GM12878 (cell line): ENCODE measurements at regions of chr13 and their contacts with region 1.

Region 1: GRCh38 chr13:24270639-24271141 is 38.7 kb upstream of the C1QTNF9 start:
- DNase-seq: peak; percentile 38
- ATAC-seq: peak; percentile 71
- H3K4me3 ChIP-seq: peak overlapping the region; percentile 60
- H3K27ac ChIP-seq: peak overlapping the region; percentile 93
- H3K4me1 ChIP-seq: peaks cover 46% of the 10 kb centered on the region
- H3K27me3 ChIP-seq: no peaks in the 10 kb centered on the region
- CTCF ChIP-seq: no peak
- EP300 ChIP-seq: no peak
- POLR2A ChIP-seq: peak; percentile 77
- RAD21 ChIP-seq: peak; percentile 16; the same call in 1 of the 2 replicates

Region 2: GRCh38 chr13:24234200-24234915 is 36.3 kb before region 1 on chr13:
- CTCF ChIA-PET with region 1: interaction called, 15 read pairs
- POLR2A ChIA-PET with region 1: interaction called, 15 read pairs
- RAD21 ChIA-PET with region 1: interaction called, 80 read pairs
- SMC1A ChIA-PET with region 1: interaction called, 25 read pairs
- in situ Hi-C with region 1: no loop called
- intact Hi-C with region 1: no loop called
- DNase-seq: no peak
- ATAC-seq: peak; percentile 72
- H3K4me3 ChIP-seq: no peak overlapping the region
- H3K27ac ChIP-seq: no peak overlapping the region
- H3K4me1 ChIP-seq: peaks cover 4% of the 10 kb centered on the region; the same call in 1 of the 2 replicates
- H3K27me3 ChIP-seq: no peaks in the 10 kb centered on the region
- CTCF ChIP-seq: no peak
- EP300 ChIP-seq: no peak
- POLR2A ChIP-seq: no peak
- RAD21 ChIP-seq: no peak

Region 3: GRCh38 chr13:24355103-24355502 is 84.4 kb after region 1 on chr13:
- CTCF ChIA-PET with region 1: no interaction called
- POLR2A ChIA-PET with region 1: no interaction called
- RAD21 ChIA-PET with region 1: no interaction called
- SMC1A ChIA-PET with region 1: no interaction called
- in situ Hi-C with region 1: no loop called
- intact Hi-C with region 1: no loop called
- DNase-seq: no peak
- ATAC-seq: no peak; the same call in 2 of the 3 replicates
- H3K4me3 ChIP-seq: no peak overlapping the region
- H3K27ac ChIP-seq: no peak overlapping the region
- H3K4me1 ChIP-seq: no peaks in the 10 kb centered on the region
- H3K27me3 ChIP-seq: no peaks in the 10 kb centered on the region
- CTCF ChIP-seq: no peak
- EP300 ChIP-seq: no peak
- POLR2A ChIP-seq: no peak
- RAD21 ChIP-seq: no peak

Region 4: DNA sequence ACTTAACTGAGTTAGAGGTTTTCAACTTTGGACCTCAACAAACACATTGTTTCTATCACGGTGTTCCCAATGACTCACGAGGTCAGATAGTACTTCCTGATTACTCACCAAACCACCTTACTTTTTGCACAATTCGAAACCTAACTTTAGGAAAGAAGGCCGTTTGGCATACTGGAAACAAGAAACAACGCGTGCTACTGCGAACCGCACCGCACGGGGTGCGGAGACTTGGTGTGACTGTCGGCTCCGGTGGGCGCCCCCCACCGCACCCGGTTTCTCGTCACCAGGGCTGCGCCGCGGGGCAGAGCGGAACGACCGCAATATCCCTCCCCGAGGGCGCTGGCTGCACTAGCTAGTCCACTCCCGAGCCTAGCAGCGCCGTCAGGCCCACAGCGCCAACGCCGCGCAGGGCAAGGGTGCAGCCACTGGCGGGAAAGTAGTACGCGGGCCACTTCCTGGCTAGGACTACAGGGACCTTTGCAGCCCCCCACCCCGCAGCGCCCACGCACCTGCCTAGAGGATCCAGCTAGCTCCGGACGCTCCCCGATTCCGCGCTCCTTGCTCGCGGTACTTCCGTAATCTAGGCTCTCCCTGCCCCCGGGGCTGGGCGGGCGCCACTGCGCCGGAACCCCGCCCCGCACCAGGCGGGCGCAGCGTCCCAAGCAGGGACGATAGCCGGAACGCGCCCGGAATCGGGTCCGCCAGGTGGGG is 241.7 kb after region 1 on chr13 and contains the start of gene PARP4:
- CTCF ChIA-PET with region 1: no interaction called
- POLR2A ChIA-PET with region 1: no interaction called
- RAD21 ChIA-PET with region 1: interaction called, 4 read pairs
- SMC1A ChIA-PET with region 1: no interaction called
- in situ Hi-C with region 1: no loop called
- intact Hi-C with region 1: loop called (anchors 5 kb)
- DNase-seq: peak; percentile 34
- ATAC-seq: peak; percentile 89
- H3K4me3 ChIP-seq: peak within 1 kb of the TSS; percentile 82
- H3K27ac ChIP-seq: peak within 1 kb of the TSS; percentile 85
- H3K4me1 ChIP-seq: no peaks in the 10 kb centered on the region
- H3K27me3 ChIP-seq: no peaks in the 10 kb centered on the region
- CTCF ChIP-seq: no peak
- EP300 ChIP-seq: no peak
- POLR2A ChIP-seq: peak; percentile 92
- RAD21 ChIP-seq: no peak
- polyA plus RNA-seq, gene PARP4: 12.8 to 13.5 TPM

Region 5: DNA sequence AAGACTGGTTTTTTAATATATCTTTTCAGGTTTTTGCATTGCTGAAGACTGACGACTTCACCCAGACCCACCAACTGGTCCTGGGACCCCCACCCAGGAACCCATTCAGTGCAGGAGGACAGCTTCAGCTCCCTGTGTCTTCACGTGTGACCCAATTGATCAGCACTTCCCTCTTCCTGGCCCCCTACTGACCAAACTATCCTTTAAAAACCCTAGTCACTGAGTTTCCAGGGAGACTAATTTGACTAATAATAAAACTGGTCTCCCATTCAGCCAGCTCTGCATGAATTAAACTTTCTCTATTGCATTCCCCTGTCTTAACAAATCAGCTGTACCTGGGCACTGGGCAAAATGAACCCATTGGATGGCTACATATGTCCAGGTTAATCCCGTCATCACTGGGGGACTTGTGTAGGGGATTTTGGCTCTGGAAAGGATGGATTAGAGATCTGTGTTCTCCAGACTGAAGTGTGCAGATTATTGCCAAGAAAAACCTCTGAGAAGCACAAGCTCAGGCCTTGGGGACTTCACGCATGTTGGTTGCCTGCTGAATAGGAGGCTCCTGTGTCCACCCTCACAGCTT is 258.2 kb after region 1 on chr13:
- CTCF ChIA-PET with region 1: no interaction called
- POLR2A ChIA-PET with region 1: no interaction called
- RAD21 ChIA-PET with region 1: no interaction called
- SMC1A ChIA-PET with region 1: no interaction called
- in situ Hi-C with region 1: no loop called
- intact Hi-C with region 1: no loop called
- DNase-seq: no peak
- ATAC-seq: no peak
- H3K4me3 ChIP-seq: no peak overlapping the region
- H3K27ac ChIP-seq: no peak overlapping the region
- H3K4me1 ChIP-seq: no peaks in the 10 kb centered on the region
- H3K27me3 ChIP-seq: no peaks in the 10 kb centered on the region
- CTCF ChIP-seq: no peak
- EP300 ChIP-seq: no peak
- POLR2A ChIP-seq: no peak
- RAD21 ChIP-seq: no peak